Activated B cell treated with CpG ODN at 0.5 μM for 24 hours (primary cell): ENCODE measurements at regions of chrX and their contacts with region 1.

Region 1: DNA sequence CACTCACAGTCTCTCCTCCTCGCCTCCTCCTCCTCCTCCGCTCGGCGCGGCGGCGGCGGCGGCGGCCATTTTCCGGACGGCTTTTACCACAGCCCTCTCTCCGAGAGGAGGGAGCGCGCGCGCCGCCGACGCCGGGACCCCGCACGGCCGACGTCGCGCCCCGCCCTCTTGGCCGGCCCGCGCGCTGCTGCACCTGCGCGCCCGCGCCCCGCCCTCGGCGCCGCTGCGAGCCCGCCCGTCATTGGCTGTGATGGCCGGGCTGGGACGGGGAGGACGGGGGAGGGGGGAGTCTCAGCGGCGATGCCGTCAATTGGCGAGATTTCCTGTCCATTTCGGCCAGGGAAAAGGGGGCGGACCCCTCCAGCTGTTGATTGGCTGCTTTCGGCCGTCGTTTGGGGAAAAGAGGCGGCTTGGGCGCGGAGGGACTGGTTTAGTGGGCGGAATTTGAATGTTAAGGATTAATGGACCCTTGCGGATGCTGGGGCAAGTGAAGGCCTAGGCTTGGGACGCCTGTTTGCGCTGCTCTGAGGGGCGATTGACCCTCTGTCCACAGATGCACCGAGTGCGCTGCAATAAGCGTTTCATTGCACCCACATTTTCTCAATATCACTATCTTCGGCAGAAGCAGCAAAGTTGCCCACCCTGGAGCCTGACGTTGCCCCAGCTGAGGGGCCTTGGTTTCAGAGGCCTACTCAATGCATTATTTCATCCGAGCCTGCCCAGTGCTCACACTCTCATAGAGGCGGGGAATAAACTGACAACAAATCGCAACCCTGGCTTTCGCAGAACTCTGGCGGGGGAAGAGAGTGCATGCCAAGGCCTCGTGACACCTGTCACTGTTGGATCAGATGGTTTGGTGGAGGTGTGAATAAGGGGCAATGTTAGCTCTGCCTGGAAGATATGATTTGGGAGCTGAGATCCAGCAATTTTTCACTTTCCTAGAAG is at the start of gene MECP2:
- DNase-seq: peak; percentile 75
- ATAC-seq: peak; percentile 93
- H3K4me3 Mint-ChIP-seq: peak within 1 kb of the TSS; percentile 90
- H3K27ac Mint-ChIP-seq: peak within 1 kb of the TSS; percentile 85
- H3K4me1 Mint-ChIP-seq: peaks cover 39% of the 10 kb centered on the region
- H3K27me3 Mint-ChIP-seq: peaks cover 2% of the 10 kb centered on the region
- CTCF ChIP-seq: no peak
- total RNA-seq, gene MECP2: 56.8 and 69.0 TPM in 2 replicates

Region 2: GRCh38 chrX:154063234-154063633 is 34.6 kb before region 1 on chrX:
- CTCF ChIA-PET with region 1: no interaction called
- POLR2A ChIA-PET with region 1: no interaction called
- intact Hi-C with region 1: loop called (anchors 5 kb)
- DNase-seq: no peak
- ATAC-seq: no peak
- H3K4me3 Mint-ChIP-seq: no peak overlapping the region
- H3K27ac Mint-ChIP-seq: no peak overlapping the region
- H3K4me1 Mint-ChIP-seq: peaks cover 64% of the 10 kb centered on the region
- H3K27me3 Mint-ChIP-seq: no peaks in the 10 kb centered on the region
- CTCF ChIP-seq: no peak